ENCODE measurements at regions of chr9 and their contacts with region 1.

Region 1: GRCh38 chr9:4984621-4985385 is at the start of gene JAK2:
- DNase-seq: peak; percentile 96 to 97
- ATAC-seq: peak; percentile 97
- H3K4me3 ChIP-seq: peak within 1 kb of the TSS; percentile 77 to 98
- H3K27ac ChIP-seq: peak within 1 kb of the TSS; percentile 71 to 90
- H3K4me1 ChIP-seq: peaks cover 0 to 2% of the 10 kb centered on the region in 2 donors
- H3K27me3 ChIP-seq: no peaks in the 10 kb centered on the region
- total RNA-seq, gene JAK2: 77.4 to 144 TPM

Region 2: DNA sequence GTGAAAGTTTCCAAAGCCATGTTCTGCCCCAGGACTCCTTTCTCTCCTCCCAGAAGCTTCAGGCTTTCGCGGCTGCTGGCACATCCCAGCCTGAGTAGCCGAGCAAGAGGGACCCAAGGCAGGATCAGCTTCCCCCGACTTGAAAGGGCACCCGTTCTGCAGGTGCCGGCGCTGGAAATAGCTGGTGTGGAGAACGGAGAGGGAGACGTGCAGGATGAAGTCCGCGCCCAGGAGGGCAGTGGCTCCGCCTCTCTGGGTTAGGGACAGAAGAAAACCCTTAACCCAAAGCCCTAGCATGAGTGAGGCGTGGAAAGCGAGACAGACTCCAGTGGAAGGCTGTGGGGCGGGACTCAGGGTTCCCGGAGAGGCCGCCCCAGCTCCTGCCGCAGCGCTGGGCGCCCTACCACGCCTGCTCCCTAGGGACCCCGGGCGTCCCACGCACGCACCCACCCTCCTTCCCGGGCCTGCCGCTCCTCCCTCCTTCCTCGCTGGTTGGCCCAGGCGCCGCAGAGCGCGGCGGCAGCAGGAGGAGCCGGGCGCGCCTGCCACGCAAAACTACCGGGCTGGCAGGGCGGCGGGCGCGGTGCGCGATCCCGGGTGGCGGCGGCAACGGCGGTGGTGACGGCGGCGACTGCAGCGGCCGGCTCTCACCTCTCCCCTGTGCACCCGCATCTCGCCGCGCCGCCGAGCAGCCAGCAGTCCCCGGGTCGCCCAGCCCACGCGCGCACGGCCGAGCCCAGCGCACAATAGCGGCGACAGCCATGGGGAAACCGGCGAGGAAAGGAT is 494.7 kb before region 1 on chr9 and contains the start of gene SLC1A1:
- intact Hi-C with region 1: no loop called
- DNase-seq: peak; percentile 85 to 88
- ATAC-seq: peak; percentile 93
- H3K4me3 ChIP-seq: peak within 1 kb of the TSS; percentile 33 to 58
- H3K27ac ChIP-seq: peak within 1 kb of the TSS; percentile 21 to 61
- H3K4me1 ChIP-seq: no peaks in the 10 kb centered on the region
- H3K27me3 ChIP-seq: no peaks in the 10 kb centered on the region
- total RNA-seq, gene SLC1A1: 3.0 to 3.2 TPM

Region 3: DNA sequence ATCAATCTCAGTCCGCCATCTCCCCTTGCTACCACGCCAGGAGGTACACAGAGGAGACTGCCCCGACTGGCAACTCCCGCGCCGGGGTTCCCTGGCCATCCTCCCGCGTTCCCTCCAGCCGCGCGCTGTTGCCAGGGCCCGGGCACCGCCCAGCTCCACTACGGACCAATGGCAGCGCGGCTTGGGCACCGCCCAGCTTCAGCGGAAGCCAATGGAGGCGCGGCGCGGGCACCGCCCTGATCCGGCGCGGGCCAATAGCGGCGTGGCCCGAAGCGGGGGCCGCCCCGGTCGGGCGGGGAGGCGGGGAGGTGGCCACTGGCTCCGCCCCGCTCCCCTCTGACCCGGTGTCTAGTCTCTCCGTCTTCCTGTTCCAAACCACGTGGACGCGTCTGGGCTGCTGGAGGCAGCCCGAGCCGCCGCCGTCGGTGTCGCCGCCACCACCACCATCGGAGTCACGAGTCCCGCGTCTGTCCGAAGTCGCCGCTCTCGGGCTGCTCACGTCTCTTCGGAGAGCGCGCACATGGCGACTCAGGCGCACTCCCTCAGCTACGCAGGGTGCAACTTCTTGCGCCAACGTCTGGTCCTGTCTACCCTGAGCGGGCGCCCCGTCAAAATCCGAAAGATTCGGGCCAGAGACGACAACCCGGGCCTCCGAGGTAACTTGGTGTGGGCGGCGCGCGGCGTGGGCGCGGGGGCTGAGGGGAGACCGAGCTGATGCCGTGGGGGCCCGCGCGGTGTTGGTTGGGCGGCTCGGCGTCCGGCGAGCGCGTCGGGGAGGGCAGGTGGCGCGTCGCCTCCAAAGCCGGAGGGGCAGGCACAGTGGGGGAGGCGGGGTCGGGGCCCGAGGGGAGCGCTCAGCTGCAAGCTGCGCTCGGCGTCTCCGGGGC is 192.0 kb before region 1 on chr9 and contains the start of gene RCL1:
- intact Hi-C with region 1: loop called in 1 of 2 experiments (anchors 2 kb)
- DNase-seq: peak; percentile 97 to 98
- ATAC-seq: peak; percentile 100
- H3K4me3 ChIP-seq: peak within 1 kb of the TSS; percentile 67 to 94
- H3K27ac ChIP-seq: peak within 1 kb of the TSS; percentile 28 to 48
- H3K4me1 ChIP-seq: peaks cover 2 to 4% of the 10 kb centered on the region in 2 donors
- H3K27me3 ChIP-seq: no peaks in the 10 kb centered on the region
- total RNA-seq, gene RCL1: 32.3 to 41.9 TPM

Region 4: DNA sequence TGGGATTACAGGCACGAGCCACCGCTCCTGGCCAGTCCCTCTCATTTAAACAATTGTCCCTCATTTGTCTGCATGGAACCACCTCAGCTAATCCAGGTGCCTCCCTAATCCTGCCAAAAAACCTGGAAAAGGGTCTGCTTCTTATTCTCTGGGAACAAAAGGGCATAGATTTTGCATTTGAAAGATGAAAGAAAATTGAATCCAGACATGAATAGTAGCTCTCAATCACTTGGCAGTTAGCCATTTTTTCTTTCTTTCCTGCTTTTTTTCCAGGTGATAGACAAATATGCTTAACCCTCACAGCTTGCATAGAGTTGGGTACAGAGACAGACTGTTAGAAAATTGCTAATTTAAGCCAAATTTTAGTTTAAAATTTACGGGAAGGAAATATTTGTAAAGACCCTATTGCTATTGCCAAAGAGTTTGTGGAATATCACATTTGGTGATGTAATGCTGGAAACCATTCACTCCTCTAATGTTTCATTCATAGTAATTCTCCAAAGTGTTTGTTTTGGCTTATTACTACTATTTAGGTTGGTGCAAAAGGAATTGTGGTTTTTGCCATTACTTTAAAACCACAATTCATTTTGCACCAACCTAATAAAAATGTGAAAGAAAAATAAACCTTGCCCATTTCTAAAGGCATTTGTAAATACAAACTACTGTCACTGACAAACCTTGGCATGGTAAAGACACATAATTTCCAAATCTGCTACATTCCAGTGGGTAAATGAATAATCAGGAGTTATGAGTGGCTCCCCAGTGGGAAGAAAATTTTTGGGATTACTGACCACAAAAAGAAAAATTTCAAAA is 80.3 kb before region 1 on chr9:
- intact Hi-C with region 1: loop called in 1 of 2 experiments (anchors 5 kb)
- DNase-seq: no peak
- ATAC-seq: peak; percentile 62
- H3K4me3 ChIP-seq: no peak overlapping the region
- H3K27ac ChIP-seq: no peak overlapping the region
- H3K4me1 ChIP-seq: peaks cover 4% of the 10 kb centered on the region in 2 donors
- H3K27me3 ChIP-seq: no peaks in the 10 kb centered on the region

Region 5: DNA sequence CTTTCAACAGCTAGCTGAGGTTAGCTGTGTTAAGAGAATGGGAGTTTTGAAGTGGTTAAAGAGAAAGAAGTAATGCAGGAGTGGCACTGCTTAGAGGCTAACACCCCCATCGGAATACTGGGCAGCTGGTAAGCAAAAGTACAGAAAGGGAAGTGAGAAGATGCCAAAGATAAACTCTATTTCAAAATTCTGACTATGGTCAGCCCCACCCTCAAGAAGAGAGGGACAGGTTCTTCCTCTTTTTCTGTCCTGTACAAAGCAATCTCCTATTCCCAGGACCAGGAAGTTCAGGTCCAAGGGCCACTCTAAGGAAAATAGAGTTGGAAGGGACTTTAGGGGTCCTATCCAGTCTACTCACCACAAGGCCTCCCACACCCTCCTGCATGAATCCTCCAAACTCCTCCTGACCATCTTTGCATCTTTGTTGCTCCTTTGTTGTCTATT is 45.7 kb before region 1 on chr9:
- intact Hi-C with region 1: loop called (anchors 5 kb)
- DNase-seq: no peak
- ATAC-seq: peak; percentile 24
- H3K4me3 ChIP-seq: no peak overlapping the region
- H3K27ac ChIP-seq: peak overlapping the region; percentile 76 to 88
- H3K4me1 ChIP-seq: peaks cover 7 to 21% of the 10 kb centered on the region in 2 donors
- H3K27me3 ChIP-seq: no peaks in the 10 kb centered on the region